ENCODE measurements at regions of chr1 and their contacts with region 1.

Region 1: DNA sequence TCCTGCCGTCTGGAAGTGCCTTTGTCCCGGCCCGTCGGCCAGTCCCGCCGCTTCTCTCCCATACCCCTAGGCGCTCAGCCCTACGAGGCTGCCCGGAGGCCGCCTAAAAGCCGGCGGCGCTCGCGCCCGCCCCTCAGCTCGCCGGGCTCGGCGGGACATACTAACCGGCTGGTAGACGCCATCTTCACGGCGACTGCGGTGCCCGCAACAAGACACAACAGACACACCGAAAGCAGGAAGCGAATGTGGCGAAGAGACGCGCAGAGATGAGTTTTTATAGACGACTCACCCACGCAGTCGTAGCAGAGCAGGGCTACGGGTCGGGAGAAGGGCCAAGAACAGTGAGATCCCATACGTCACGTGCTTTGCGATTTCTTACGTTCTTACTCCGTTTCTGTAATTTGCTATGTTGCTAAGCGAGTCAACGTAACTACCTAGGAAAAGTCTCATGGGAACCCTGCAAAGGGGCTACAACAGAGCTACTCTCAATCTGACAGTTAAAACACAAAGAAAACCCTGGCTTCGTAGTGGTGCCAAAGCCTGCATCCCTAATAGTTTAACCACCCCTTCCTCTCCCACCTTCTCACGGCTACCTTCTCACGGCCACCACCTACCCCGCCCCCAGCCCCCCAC is at the start of gene GTF2B:
- DNase-seq: peak; percentile 92
- H3K4me3 Mint-ChIP-seq: peak within 1 kb of the TSS; percentile 92
- H3K27ac Mint-ChIP-seq: peak within 1 kb of the TSS; percentile 95
- H3K4me1 Mint-ChIP-seq: peaks cover 49% of the 10 kb centered on the region
- H3K27me3 Mint-ChIP-seq: no peaks in the 10 kb centered on the region
- total RNA-seq, gene GTF2B: 45.5 and 49.1 TPM in 2 replicates

Region 2: DNA sequence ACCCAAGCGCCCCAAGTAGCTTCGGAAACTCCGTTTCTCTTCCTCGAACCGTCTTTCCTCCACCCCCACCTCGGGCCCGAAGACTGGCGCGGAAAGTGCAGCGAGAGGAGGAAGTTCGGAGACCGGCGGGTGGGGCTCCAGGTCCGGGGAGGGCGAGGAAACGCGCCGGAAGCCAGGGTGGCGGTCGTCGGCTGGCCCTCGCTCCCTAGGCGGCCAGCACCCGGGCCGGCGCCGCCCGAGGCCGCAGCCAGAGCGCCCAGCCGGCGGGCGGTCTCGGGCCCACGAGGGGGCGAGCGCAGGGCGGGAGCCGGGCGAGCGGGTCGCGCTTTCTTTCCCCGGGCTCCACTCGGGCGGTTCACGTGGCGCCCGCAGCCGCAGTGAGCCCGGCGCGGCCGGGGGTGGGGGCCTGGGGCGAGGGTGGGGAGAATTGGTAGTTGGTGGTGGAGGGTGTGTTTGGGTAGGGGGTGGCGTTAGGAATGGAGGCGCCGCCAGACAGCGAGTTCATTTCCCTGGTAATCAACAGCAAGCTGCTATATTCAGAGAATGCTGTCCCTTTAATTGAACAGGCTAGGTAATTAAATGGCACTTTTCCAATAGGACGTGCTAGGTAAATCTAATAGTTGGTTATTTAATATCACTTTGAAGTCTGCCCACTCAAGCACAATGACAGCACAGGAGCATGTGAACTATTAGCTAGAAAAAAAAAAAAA is 1556.1 kb before region 1 on chr1:
- intact Hi-C with region 1: loop called (anchors 10 kb)
- DNase-seq: peak; percentile 66
- H3K4me3 Mint-ChIP-seq: peak overlapping the region; percentile 89
- H3K27ac Mint-ChIP-seq: peak overlapping the region; percentile 99
- H3K4me1 Mint-ChIP-seq: peaks cover 67% of the 10 kb centered on the region
- H3K27me3 Mint-ChIP-seq: no peaks in the 10 kb centered on the region

Region 3: DNA sequence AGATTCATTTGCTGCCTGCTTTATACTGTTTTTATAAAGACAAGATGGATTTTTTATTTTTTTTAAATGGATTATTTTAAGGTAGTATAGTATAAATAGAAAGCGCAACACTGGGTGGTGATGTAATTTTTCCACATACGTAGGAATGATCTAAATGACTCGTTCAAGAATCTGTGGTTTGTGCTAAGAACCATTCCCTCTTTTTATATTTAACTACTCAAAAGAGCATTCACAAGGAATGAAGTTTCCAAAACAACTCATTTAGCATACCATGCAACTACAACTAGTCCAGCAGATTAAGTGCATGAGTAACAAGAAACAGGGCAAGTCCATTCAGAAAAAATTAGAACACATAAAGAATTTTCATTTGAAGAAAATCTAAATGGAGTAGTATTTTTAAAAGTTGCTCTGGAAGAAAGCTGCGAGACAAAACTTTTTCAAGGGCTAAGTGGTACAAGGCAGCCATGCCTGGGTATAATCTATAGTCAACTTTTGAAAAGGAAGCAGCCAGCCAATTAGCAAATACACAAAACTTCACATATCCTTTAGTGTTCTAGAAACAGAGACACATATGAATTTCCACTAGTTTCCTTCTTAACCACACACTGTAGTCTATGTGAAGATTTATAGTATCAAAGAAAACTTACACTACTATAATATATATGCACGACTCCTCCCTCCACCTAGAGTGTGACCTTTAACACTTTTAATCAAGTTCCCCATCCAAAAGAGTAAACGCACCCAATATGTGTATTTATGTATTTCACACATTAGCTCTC is 23.5 kb before region 1 on chr1:
- intact Hi-C with region 1: loop called (anchors 1 kb)
- DNase-seq: no peak
- H3K4me3 Mint-ChIP-seq: peak overlapping the region; percentile 60
- H3K27ac Mint-ChIP-seq: peak overlapping the region; percentile 87
- H3K4me1 Mint-ChIP-seq: peaks cover 35% of the 10 kb centered on the region
- H3K27me3 Mint-ChIP-seq: no peaks in the 10 kb centered on the region

Region 4: DNA sequence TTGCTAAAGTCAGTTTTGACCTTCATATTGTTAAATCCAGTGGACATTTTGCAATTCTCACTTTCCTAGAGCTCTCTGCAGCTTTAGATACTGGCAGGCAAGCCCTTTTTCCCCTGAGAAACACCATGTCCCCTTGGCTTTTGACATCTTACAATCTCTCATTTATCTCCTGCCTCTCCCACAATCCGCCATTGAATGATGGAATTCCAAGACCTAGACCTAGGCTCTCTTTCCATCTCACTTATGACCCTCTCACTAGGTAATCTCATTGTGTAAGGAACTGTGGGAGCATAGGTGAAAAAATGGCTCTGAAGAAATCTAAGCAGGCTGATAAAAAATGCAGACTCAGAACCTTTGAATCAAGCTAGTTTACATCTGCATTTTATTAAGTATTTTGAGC is 99.0 kb after region 1 on chr1:
- intact Hi-C with region 1: loop called (anchors 1 kb)
- DNase-seq: no peak
- H3K4me3 Mint-ChIP-seq: peak overlapping the region; percentile 12
- H3K27ac Mint-ChIP-seq: no peak overlapping the region
- H3K4me1 Mint-ChIP-seq: peaks cover 50% of the 10 kb centered on the region
- H3K27me3 Mint-ChIP-seq: no peaks in the 10 kb centered on the region

Region 5: GRCh38 chr1:89081005-89081404 is 189.6 kb after region 1 on chr1:
- intact Hi-C with region 1: no loop called
- DNase-seq: no peak
- H3K4me3 Mint-ChIP-seq: no peak overlapping the region
- H3K27ac Mint-ChIP-seq: no peak overlapping the region
- H3K4me1 Mint-ChIP-seq: peaks cover 8% of the 10 kb centered on the region
- H3K27me3 Mint-ChIP-seq: peaks cover 3% of the 10 kb centered on the region

Measured in activated T-helper 1 cell treated with anti-CD3 and anti-CD28 coated beads, Interleukin-12 subunit alpha, Interleukin-12 subunit beta, Interleukin-2, Interleukin-4 antibody, amounts not matched to agents 30 ng/mL and 10 ng/mL and 1 ng/mL, durations not matched to agents 14 hours and 24 hours and 36 hours (primary cell).